ENCODE measurements at regions of chr4 and their contacts with region 1.

Region 1: DNA sequence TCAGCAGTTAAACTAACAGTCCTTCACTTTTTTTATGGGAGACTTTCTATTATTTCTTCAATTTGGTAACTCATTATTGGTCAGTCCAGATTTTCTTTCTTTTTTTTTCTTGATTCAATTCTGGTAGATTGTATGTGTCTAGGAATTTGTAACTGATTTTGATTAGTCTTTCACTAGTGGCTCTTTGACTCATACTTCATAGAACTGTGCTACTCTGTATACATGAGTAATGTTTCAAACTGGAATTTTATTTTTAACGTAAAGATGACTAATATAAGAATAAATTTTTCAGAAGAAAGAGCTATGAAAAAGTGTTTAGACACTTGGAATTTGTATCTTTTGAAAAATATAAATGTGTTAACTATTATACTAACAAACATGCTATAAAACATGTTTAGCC is 813.0 kb downstream of the TRAM1L1 start:
- DNase-seq: no peak
- H3K4me3 ChIP-seq: no peak overlapping the region
- H3K27ac ChIP-seq: no peak overlapping the region
- H3K4me1 ChIP-seq: no peaks in the 10 kb centered on the region
- H3K27me3 ChIP-seq: no peaks in the 10 kb centered on the region
- CTCF ChIP-seq: no peak

Region 2: GRCh38 chr4:116070283-116070682 is 202.1 kb before region 1 on chr4:
- intact Hi-C with region 1: loop called (anchors 5 kb)
- DNase-seq: no peak
- H3K4me3 ChIP-seq: no peak overlapping the region
- H3K27ac ChIP-seq: no peak overlapping the region
- H3K4me1 ChIP-seq: no peaks in the 10 kb centered on the region
- H3K27me3 ChIP-seq: no peaks in the 10 kb centered on the region
- CTCF ChIP-seq: no peak

Region 3: DNA sequence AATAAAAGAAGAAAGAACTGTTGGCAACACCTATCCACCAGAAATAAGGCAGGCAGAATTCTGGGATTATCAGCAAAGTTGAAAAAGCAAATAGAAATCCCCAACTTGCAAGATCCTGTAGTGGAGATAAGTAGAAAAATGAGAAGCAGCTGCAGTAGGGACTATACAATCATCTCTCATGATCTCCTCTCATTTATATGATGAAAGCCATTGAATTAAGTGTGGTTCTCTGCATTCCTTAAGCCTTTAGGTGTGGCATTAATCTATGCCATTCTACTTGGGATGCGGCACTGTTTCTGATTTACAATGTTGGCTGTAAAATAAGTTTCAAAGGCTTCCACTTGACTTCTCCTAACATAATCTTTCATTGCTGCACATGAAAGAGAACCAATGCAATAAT is 56.7 kb before region 1 on chr4:
- intact Hi-C with region 1: no loop called
- DNase-seq: no peak
- H3K4me3 ChIP-seq: no peak overlapping the region
- H3K27ac ChIP-seq: no peak overlapping the region
- H3K4me1 ChIP-seq: no peaks in the 10 kb centered on the region
- H3K27me3 ChIP-seq: no peaks in the 10 kb centered on the region
- CTCF ChIP-seq: no peak

Measured in tibial artery (tissue), 4 donors.